ENCODE measurements at regions of chr1 and their contacts with region 1.

Region 1: GRCh38 chr1:164786980-164787833 is 228.2 kb downstream of the PBX1 start:
- DNase-seq: peak; percentile 85
- CTCF ChIP-seq: peak; percentile 96

Region 2: DNA sequence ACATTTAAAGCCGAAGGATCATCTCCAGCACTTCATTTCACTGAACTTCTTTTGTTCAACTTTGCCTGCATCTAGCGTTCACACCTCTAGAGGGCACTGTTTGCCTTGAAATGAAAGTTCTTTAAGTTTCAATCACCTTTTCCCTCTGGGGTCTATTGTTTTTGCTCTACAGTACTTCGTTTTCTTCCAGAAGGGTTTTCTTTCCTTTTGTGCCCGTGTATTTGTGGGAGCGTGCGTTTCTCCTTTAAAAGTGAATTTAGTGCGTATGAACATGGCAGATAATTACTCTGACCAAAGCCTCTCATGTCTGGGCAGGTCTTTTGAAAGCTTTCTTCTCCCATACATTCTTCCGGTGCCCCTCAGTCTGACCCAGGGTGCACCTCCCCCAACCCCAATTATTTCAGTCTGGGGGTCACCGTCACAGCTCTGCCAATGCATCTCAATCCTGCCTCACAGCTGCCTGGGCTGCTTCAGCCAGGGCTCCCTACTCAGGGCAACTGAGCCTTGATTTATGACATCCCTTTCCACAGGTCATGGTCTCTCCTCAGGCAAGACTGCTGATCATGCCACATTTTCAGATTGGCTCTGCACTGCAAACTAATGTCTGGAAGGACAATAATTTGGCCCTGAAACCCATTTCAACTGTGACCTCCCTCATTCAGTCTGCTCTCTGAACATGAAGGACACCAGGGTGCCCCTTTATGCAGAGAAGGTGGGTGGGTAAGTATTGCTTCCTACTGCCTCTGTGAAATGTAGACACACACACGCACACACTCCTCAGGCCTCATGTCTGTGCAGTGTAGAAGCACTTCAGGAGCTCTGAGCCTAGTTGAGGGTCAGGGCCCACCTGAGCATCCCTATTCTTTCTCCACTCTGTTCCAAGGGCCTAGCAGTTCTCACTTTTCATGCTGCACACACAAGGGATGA is 1376.9 kb before region 1 on chr1:
- in situ Hi-C with region 1: loop called (anchors 25 kb)
- DNase-seq: peak; percentile 49
- CTCF ChIP-seq: peak; percentile 80

Region 3: GRCh38 chr1:164588516-164589341 is 198.5 kb before region 1 on chr1:
- in situ Hi-C with region 1: no loop called
- DNase-seq: no peak
- CTCF ChIP-seq: no peak

Region 4: GRCh38 chr1:164601399-164602374 is 185.5 kb before region 1 on chr1:
- in situ Hi-C with region 1: no loop called
- DNase-seq: no peak
- CTCF ChIP-seq: no peak

Region 5: GRCh38 chr1:164823486-164824279 is 36.5 kb after region 1 on chr1:
- in situ Hi-C with region 1: no loop called
- DNase-seq: no peak
- CTCF ChIP-seq: no peak

Measured in GM13977 (cell line).